CD4-positive, alpha-beta T cell (primary cell): ENCODE measurements at regions of chr6 and their contacts with region 1.

Region 1: DNA sequence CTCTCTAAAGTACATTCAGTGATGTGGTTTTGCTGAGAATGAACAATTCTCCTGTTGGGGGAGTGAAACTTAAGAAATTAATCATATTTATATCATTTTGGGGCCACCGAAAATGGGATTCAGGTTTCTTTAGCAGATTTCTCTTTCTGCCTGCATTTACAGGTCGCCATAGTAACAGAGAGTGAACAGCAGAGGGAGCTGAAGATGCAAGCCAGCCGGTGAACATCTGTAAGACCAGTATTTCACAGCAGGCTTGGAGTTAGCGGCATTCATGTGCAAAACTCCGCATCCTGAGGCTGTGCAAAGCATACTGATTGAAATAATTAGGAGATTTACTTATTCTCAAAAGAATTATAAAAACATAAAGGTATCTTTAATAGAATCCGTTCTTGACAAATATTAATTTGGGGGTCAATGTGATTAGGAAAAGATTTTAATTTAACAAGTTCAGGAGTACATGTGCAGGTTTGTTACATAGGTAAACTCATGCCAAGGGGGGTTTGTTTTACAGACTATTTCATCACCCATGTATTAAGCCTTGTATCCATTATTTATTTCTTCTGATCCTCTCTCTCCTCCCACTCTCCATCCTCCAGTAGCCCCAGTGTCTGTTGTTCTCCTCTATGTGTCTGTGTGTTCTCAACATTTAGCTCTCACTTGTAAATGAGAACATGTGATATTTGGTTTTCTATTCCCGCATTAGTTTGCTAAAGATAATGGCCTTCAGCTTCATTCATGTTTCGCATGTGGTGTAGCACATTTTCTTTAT is 17.8 kb upstream of the HSF2 start:
- DNase-seq: peak; percentile 38 to 85 (median 48)
- ATAC-seq: peak; percentile 100
- H3K4me3 ChIP-seq: no peak overlapping the region
- H3K4me3 Mint-ChIP-seq: no peak overlapping the region
- H3K27ac ChIP-seq: no peak overlapping the region
- H3K27ac Mint-ChIP-seq: no peak overlapping the region
- H3K4me1 ChIP-seq: no peaks in the 10 kb centered on the region
- H3K4me1 Mint-ChIP-seq: peaks cover 8% of the 10 kb centered on the region
- H3K27me3 ChIP-seq: no peaks in the 10 kb centered on the region
- H3K27me3 Mint-ChIP-seq: peaks cover 13% of the 10 kb centered on the region
- CTCF ChIP-seq: peak; percentile 88

Region 2: DNA sequence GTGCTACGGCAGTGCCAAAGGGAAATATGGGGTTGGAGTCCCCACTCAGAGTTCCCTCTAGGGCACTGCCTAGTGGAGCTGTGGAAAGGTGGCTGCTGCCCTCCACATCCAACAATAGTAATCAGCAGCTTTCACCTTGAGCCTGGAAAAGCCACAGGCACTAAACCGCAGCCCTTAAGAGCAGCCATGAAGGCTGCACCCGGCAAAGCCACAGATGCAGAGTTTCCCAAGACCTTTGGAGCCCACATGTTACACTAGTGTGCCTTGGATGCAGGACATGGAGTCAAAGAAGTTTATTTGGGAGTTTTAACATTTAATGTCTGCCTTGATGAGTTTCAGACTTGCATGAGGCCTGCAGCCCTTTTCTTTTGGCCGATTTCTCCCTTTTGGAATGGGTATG is 73.6 kb before region 1 on chr6:
- CTCF ChIA-PET with region 1: no interaction called
- POLR2A ChIA-PET with region 1: no interaction called
- intact Hi-C with region 1: no loop called
- DNase-seq: no peak
- ATAC-seq: no peak
- H3K4me3 ChIP-seq: no peak overlapping the region
- H3K4me3 Mint-ChIP-seq: no peak overlapping the region
- H3K27ac ChIP-seq: no peak overlapping the region
- H3K27ac Mint-ChIP-seq: no peak overlapping the region
- H3K4me1 ChIP-seq: no peaks in the 10 kb centered on the region
- H3K4me1 Mint-ChIP-seq: no peaks in the 10 kb centered on the region
- H3K27me3 ChIP-seq: no peaks in the 10 kb centered on the region
- H3K27me3 Mint-ChIP-seq: peaks cover 24% of the 10 kb centered on the region
- CTCF ChIP-seq: no peak

Region 3: GRCh38 chr6:122399384-122400158 is 17.9 kb after region 1 on chr6 and contains the start of gene HSF2:
- CTCF ChIA-PET with region 1: interaction called, 11 read pairs
- POLR2A ChIA-PET with region 1: interaction called, 4 read pairs
- intact Hi-C with region 1: no loop called
- DNase-seq: peak; percentile 86 to 98 (median 91)
- ATAC-seq: peak; percentile 94
- H3K4me3 ChIP-seq: peak within 1 kb of the TSS; percentile 94
- H3K4me3 Mint-ChIP-seq: peak within 1 kb of the TSS; percentile 100
- H3K27ac ChIP-seq: peak within 1 kb of the TSS; percentile 70 to 89
- H3K27ac Mint-ChIP-seq: peak within 1 kb of the TSS; percentile 86
- H3K4me1 ChIP-seq: peaks cover 12% of the 10 kb centered on the region
- H3K4me1 Mint-ChIP-seq: peaks cover 42% of the 10 kb centered on the region
- H3K27me3 ChIP-seq: no peaks in the 10 kb centered on the region
- H3K27me3 Mint-ChIP-seq: no peaks in the 10 kb centered on the region
- CTCF ChIP-seq: peak; percentile 24
- total RNA-seq, gene HSF2: 41.8 to 47.6 TPM

Region 4: GRCh38 chr6:122530440-122531046 is 148.9 kb after region 1 on chr6:
- CTCF ChIA-PET with region 1: interaction called, 39 read pairs
- POLR2A ChIA-PET with region 1: interaction called, 6 read pairs
- intact Hi-C with region 1: loop called (anchors 1 kb)
- DNase-seq: peak in 13 of 14 experiments; percentile 1 to 77 (median 40)
- ATAC-seq: peak; percentile 94
- H3K4me3 ChIP-seq: no peak overlapping the region
- H3K4me3 Mint-ChIP-seq: no peak overlapping the region
- H3K27ac ChIP-seq: no peak overlapping the region
- H3K27ac Mint-ChIP-seq: no peak overlapping the region
- H3K4me1 ChIP-seq: no peaks in the 10 kb centered on the region
- H3K4me1 Mint-ChIP-seq: no peaks in the 10 kb centered on the region
- H3K27me3 ChIP-seq: peaks cover 2 to 7% of the 10 kb centered on the region in 2 experiments
- H3K27me3 Mint-ChIP-seq: peaks cover 26% of the 10 kb centered on the region
- CTCF ChIP-seq: peak; percentile 97

Region 5: GRCh38 chr6:122730775-122731386 is 349.2 kb after region 1 on chr6:
- CTCF ChIA-PET with region 1: no interaction called
- POLR2A ChIA-PET with region 1: no interaction called
- intact Hi-C with region 1: loop called in 1 of 2 experiments (anchors 5 kb)
- DNase-seq: peak in 3 of 14 experiments; percentile 20 to 38 (median 30)
- ATAC-seq: no peak
- H3K4me3 ChIP-seq: no peak overlapping the region
- H3K4me3 Mint-ChIP-seq: no peak overlapping the region
- H3K27ac ChIP-seq: no peak overlapping the region
- H3K27ac Mint-ChIP-seq: no peak overlapping the region
- H3K4me1 ChIP-seq: no peaks in the 10 kb centered on the region
- H3K4me1 Mint-ChIP-seq: no peaks in the 10 kb centered on the region
- H3K27me3 ChIP-seq: no peaks in the 10 kb centered on the region
- H3K27me3 Mint-ChIP-seq: peaks cover 5% of the 10 kb centered on the region
- CTCF ChIP-seq: peak; percentile 63

Region 6: GRCh38 chr6:122839477-122839876 is 457.8 kb after region 1 on chr6:
- CTCF ChIA-PET with region 1: no interaction called
- POLR2A ChIA-PET with region 1: no interaction called
- intact Hi-C with region 1: loop called in 1 of 2 experiments (anchors 10 kb)
- DNase-seq: peak in 12 of 14 experiments; percentile 1 to 63 (median 16)
- ATAC-seq: peak; percentile 60
- H3K4me3 ChIP-seq: no peak overlapping the region
- H3K4me3 Mint-ChIP-seq: no peak overlapping the region
- H3K27ac ChIP-seq: no peak overlapping the region
- H3K27ac Mint-ChIP-seq: no peak overlapping the region
- H3K4me1 ChIP-seq: no peaks in the 10 kb centered on the region
- H3K4me1 Mint-ChIP-seq: no peaks in the 10 kb centered on the region
- H3K27me3 ChIP-seq: no peaks in the 10 kb centered on the region
- H3K27me3 Mint-ChIP-seq: peaks cover 14% of the 10 kb centered on the region
- CTCF ChIP-seq: peak; percentile 39